ENCODE measurements at regions of chr19 and their contacts with region 1.

Region 1: DNA sequence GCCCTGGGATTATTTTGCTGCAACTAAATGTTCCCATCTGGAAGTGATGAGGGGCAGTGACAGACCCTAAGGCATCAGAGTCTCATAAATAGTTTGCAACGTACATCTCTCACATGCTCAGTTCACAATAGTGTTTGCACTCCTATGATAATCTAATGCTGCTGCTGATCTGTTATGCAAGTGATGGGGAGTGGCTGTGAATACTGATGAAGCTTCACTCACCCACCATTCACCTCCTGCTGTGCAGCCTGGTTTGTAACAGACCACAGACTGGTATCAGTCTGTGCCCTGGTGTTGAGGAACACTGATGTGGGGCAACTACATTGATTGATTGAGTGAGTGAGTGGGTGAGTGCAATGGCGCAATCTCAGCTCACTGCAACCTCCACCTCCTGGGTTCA is 54.9 kb downstream of the ZNF726 start:
- DNase-seq: no peak
- ATAC-seq: no peak
- H3K4me3 ChIP-seq: no peak overlapping the region
- H3K27ac ChIP-seq: no peak overlapping the region
- H3K4me1 ChIP-seq: no peaks in the 10 kb centered on the region
- H3K27me3 ChIP-seq: no peaks in the 10 kb centered on the region

Region 2: DNA sequence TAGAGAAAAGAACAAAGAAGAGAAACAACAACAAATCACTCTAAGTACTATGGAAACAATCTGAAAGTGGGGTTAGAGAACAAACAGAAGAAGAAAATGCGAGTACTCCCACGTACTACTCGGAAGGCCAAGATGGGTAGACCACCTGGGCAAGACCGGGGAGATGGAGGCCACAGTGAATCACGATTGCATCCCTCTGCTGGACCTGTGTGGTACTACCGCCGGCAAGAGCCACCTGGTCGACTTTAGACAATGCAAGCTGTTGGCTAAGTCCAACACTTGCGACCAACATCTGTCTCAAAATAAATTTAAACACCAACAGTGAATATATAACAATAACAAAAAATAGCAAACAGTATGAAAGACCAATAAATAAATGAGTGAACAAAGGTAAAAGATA is 528.8 kb before region 1 on chr19:
- intact Hi-C with region 1: no loop called
- DNase-seq: no peak
- ATAC-seq: no peak
- H3K4me3 ChIP-seq: no peak overlapping the region
- H3K27ac ChIP-seq: no peak overlapping the region
- H3K4me1 ChIP-seq: no peaks in the 10 kb centered on the region
- H3K27me3 ChIP-seq: no peaks in the 10 kb centered on the region

Region 3: GRCh38 chr19:23872282-23872919 is 97.2 kb before region 1 on chr19:
- intact Hi-C with region 1: loop called in 2 of 4 experiments (anchors 2 to 5 kb)
- DNase-seq: no peak
- ATAC-seq: no peak
- H3K4me3 ChIP-seq: no peak overlapping the region
- H3K27ac ChIP-seq: no peak overlapping the region
- H3K4me1 ChIP-seq: no peaks in the 10 kb centered on the region
- H3K27me3 ChIP-seq: no peaks in the 10 kb centered on the region